ENCODE measurements at regions of chr5 and their contacts with region 1.

Region 1: DNA sequence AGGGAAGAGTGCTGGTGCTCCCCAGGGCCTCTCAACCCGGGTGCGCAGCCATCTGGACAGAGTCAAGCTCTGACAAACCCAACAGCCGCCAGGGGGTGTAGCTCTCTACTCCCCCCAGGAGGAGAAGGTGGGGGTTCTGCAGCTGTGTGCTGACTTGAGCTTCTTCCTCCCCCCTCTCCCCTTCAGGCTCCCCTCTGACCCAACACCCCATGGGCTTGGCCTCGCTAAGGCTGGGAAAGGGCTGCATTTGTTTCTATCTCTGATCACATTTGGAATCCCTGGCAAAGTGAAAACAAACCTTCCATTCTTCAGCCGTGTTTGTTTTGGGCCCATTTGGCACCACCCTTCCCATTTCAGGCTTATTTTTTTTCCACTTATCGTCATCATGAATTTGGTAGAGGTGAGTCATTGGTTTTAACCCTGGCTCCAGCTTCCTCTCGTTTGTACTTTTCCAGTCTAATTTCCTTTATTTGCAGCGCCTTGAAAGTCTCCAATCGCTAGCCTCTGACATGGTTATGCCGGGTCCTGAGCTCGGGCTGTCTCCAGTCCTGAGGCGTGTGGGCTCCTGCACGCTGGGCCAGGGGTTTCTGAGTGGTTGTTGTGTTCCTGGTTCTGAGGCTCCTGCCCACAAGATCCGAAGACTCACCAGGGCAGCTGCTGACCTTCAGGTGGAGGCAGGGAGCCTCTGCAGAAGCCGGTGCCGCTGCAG is 36.1 kb downstream of the DAP start:
- DNase-seq: peak; percentile 75
- ATAC-seq: peak; percentile 78
- H3K4me3 ChIP-seq: peak overlapping the region; percentile 23 to 48
- H3K27ac ChIP-seq: peak overlapping the region; percentile 96
- H3K4me1 ChIP-seq: peaks cover 44 to 59% of the 10 kb centered on the region in 2 experiments
- H3K27me3 ChIP-seq: no peaks in the 10 kb centered on the region
- CTCF ChIP-seq: peak; percentile 27 to 82 (median 60); a peak in 5 of 6 replicates
- POLR2A ChIP-seq: no peak
- RAD21 ChIP-seq: peak; percentile 24; the same call in 1 of the 2 replicates

Region 2: GRCh38 chr5:10761166-10761932 is 36.4 kb after region 1 on chr5 and contains the start of gene DAP:
- CTCF ChIA-PET with region 1: no interaction called
- POLR2A ChIA-PET with region 1: no interaction called
- RAD21 ChIA-PET with region 1: no interaction called
- intact Hi-C with region 1: loop called (anchors 2 kb)
- DNase-seq: peak; percentile 51
- ATAC-seq: peak; percentile 91
- H3K4me3 ChIP-seq: peak within 1 kb of the TSS; percentile 54 to 71
- H3K27ac ChIP-seq: peak within 1 kb of the TSS; percentile 86
- H3K4me1 ChIP-seq: peaks cover 7 to 17% of the 10 kb centered on the region in 2 experiments; a peak in 2 of 4 replicates
- H3K27me3 ChIP-seq: no peaks in the 10 kb centered on the region
- CTCF ChIP-seq: no peak
- POLR2A ChIP-seq: no peak
- RAD21 ChIP-seq: no peak
- total RNA-seq, gene DAP: 59.1 TPM

Measured in HCT116 (cell line).